ENCODE measurements at regions of chrX and their contacts with region 1.

Region 1: GRCh38 chrX:147476008-147476407 is 435.7 kb upstream of the FMR1 start:
- DNase-seq: no peak
- H3K4me3 Mint-ChIP-seq: no peak overlapping the region
- H3K27ac Mint-ChIP-seq: no peak overlapping the region
- H3K4me1 Mint-ChIP-seq: no peaks in the 10 kb centered on the region
- H3K27me3 Mint-ChIP-seq: no peaks in the 10 kb centered on the region

Region 2: DNA sequence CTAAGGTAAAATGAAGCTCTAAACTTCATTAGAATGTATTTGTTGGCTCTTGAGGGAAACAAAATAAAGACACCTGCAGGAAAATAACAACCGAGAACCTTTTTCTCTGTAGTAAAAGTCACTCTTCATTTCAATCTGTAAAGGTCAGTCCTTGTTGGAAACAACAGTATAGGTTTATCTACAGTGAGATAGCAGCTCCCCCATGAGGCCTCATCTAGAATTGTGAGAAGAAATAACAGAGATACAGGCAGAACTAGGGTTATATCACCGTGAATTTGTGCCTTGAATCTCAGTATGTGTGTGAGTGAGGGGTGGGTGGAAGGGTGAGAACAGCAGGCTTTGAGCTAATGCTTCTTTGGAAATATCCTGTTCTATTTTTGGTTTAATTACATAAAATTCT is 327.9 kb after region 1 on chrX:
- intact Hi-C with region 1: loop called (anchors 1 kb)
- DNase-seq: no peak
- H3K4me3 Mint-ChIP-seq: no peak overlapping the region
- H3K27ac Mint-ChIP-seq: no peak overlapping the region
- H3K4me1 Mint-ChIP-seq: no peaks in the 10 kb centered on the region
- H3K27me3 Mint-ChIP-seq: no peaks in the 10 kb centered on the region